Activated CD4-positive, alpha-beta T cell treated with anti-CD3 and anti-CD28 coated beads, Interleukin-2, amount 10 ng/mL, durations not matched to agents 24 days and 14 days (primary cell): ENCODE measurements at regions of chr14 and their contacts with region 1.

Region 1: GRCh38 chr14:22872033-22872832 is 693 bp downstream of the LRP10 start:
- DNase-seq: peak; percentile 93
- H3K4me3 Mint-ChIP-seq: peak overlapping the region; percentile 88
- H3K27ac Mint-ChIP-seq: peak overlapping the region; percentile 89
- H3K4me1 Mint-ChIP-seq: peaks cover 18% of the 10 kb centered on the region
- H3K27me3 Mint-ChIP-seq: no peaks in the 10 kb centered on the region

Region 2: GRCh38 chr14:22829661-22830442 is 42.4 kb before region 1 on chr14 and contains the start of gene MRPL52:
- intact Hi-C with region 1: loop called (anchors 1 kb)
- DNase-seq: peak; percentile 96
- H3K4me3 Mint-ChIP-seq: peak within 1 kb of the TSS; percentile 98
- H3K27ac Mint-ChIP-seq: peak within 1 kb of the TSS; percentile 95
- H3K4me1 Mint-ChIP-seq: peaks cover 19% of the 10 kb centered on the region
- H3K27me3 Mint-ChIP-seq: no peaks in the 10 kb centered on the region
- total RNA-seq, gene MRPL52: 189 and 194 TPM in 2 replicates

Region 3: DNA sequence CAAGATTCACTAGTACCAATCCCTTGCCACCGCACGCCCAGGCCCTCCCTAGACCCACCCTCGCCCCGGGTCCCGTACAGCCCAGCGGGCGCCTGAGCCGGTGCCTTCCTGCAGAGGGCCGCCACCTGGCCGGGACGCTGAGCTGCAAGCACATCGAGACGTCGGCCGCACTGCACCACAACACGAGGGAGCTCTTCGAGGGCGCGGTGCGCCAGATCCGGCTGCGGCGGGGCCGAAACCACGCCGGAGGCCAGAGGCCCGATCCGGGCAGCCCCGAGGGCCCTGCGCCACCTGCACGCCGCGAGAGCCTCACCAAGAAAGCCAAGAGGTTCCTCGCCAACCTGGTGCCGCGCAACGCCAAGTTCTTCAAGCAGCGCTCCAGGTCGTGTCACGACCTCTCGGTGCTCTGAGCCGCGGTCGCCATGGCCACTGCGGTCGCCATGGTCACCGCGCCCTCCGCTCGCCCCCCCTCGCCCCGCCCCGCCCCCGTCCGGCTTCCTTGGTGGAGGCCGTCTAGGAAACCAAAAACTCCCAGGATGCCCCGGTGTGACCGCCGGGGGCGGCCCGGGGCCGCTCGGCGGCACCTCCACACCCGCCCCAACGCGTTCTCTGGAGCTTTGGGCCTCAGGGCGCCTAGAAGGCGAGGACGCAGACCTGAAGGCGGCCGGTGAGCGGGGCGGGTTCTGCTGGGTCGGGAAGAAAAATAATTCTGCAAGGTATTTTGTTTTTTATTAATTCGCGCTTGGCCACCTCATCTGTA is 14.4 kb after region 1 on chr14:
- intact Hi-C with region 1: loop called (anchors 1 kb)
- DNase-seq: peak; percentile 90
- H3K4me3 Mint-ChIP-seq: peak overlapping the region; percentile 91
- H3K27ac Mint-ChIP-seq: peak overlapping the region; percentile 92
- H3K4me1 Mint-ChIP-seq: peaks cover 37% of the 10 kb centered on the region
- H3K27me3 Mint-ChIP-seq: peaks cover 8% of the 10 kb centered on the region

Region 4: GRCh38 chr14:22918804-22919600 is 46.8 kb after region 1 on chr14 and contains the start of gene RBM23:
- intact Hi-C with region 1: loop called (anchors 1 kb)
- DNase-seq: peak; percentile 100
- H3K4me3 Mint-ChIP-seq: peak within 1 kb of the TSS; percentile 95
- H3K27ac Mint-ChIP-seq: peak within 1 kb of the TSS; percentile 100
- H3K4me1 Mint-ChIP-seq: peaks cover 27% of the 10 kb centered on the region
- H3K27me3 Mint-ChIP-seq: peaks cover 2% of the 10 kb centered on the region
- total RNA-seq, gene RBM23: 82.7 and 90.2 TPM in 2 replicates